ENCODE measurements at regions of chr13 and their contacts with region 1.

Region 1: GRCh38 chr13:25574437-25575411 is 202.9 kb downstream of the ATP8A2 start:
- DNase-seq: peak; percentile 46 to 80 (median 73)
- ATAC-seq: peak; percentile 66
- H3K4me3 ChIP-seq: no peak overlapping the region
- H3K4me3 Mint-ChIP-seq: no peak overlapping the region
- H3K27ac ChIP-seq: no peak overlapping the region
- H3K27ac Mint-ChIP-seq: no peak overlapping the region
- H3K4me1 ChIP-seq: no peaks in the 10 kb centered on the region
- H3K4me1 Mint-ChIP-seq: no peaks in the 10 kb centered on the region
- H3K27me3 ChIP-seq: peaks cover 0 to 4% of the 10 kb centered on the region in 2 experiments
- H3K27me3 Mint-ChIP-seq: peaks cover 28% of the 10 kb centered on the region
- CTCF ChIP-seq: peak; percentile 68

Region 2: DNA sequence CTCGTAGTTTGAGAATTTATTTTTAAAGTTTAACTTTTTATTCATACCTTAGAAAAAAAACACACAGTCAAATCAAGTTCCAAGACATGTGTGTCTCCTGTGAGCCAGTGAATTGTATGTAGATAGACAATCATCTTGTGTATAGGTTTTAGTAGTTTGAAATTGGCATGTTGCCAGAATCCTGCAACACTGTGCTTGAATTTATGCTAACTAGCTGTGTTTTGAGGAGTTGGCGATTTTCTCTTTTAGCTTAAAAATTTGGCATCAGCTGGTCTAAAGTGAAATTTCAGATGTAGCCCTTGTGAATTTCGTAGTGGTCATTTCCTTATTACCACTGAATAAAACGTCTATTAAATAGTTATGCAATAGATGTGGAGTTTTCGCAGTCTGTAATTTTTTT is 10.3 kb after region 1 on chr13:
- CTCF ChIA-PET with region 1: interaction called, 22 read pairs
- POLR2A ChIA-PET with region 1: no interaction called
- intact Hi-C with region 1: no loop called
- DNase-seq: no peak
- ATAC-seq: no peak
- H3K4me3 ChIP-seq: no peak overlapping the region
- H3K4me3 Mint-ChIP-seq: no peak overlapping the region
- H3K27ac ChIP-seq: no peak overlapping the region
- H3K27ac Mint-ChIP-seq: no peak overlapping the region
- H3K4me1 ChIP-seq: no peaks in the 10 kb centered on the region
- H3K4me1 Mint-ChIP-seq: no peaks in the 10 kb centered on the region
- H3K27me3 ChIP-seq: no peaks in the 10 kb centered on the region
- H3K27me3 Mint-ChIP-seq: peaks cover 14% of the 10 kb centered on the region
- CTCF ChIP-seq: no peak

Region 3: DNA sequence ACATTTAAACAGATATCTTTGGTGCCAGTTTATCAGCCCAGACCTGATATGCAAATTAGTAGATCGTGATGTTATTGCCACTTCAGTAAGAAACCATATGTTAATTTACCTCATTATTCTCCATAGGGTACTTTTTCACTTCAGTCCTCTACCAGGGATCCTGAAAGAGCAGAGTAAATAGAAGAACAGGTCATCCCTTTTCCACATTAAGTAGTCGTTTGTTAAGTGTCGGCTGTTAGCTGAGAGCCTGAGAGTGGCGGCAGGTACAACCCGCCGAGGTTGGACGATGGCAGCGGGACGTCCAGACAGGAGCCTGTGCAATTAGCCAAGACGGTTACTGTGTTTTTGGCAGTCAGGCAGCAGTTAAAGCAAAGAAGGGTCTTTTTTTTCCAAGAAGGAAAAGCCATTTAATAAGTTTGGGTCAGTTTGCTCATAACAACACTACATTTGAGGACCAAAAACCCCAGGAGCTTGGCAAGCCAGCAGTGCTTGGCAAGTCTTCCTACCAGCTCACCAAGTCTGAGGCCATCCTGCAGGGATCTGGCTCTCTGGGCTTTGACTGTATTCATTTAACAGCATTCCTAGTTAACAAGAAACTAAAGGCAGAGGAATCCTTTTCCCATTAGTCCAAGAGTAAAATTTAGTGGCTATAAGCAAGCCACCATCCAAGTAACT is 245.3 kb after region 1 on chr13:
- CTCF ChIA-PET with region 1: no interaction called
- POLR2A ChIA-PET with region 1: no interaction called
- intact Hi-C with region 1: loop called in 1 of 2 experiments (anchors 10 kb)
- DNase-seq: no peak
- ATAC-seq: no peak
- H3K4me3 ChIP-seq: no peak overlapping the region
- H3K4me3 Mint-ChIP-seq: no peak overlapping the region
- H3K27ac ChIP-seq: no peak overlapping the region
- H3K27ac Mint-ChIP-seq: no peak overlapping the region
- H3K4me1 ChIP-seq: no peaks in the 10 kb centered on the region
- H3K4me1 Mint-ChIP-seq: no peaks in the 10 kb centered on the region
- H3K27me3 ChIP-seq: no peaks in the 10 kb centered on the region
- H3K27me3 Mint-ChIP-seq: no peaks in the 10 kb centered on the region
- CTCF ChIP-seq: no peak

Region 4: GRCh38 chr13:26062844-26063444 is 488.2 kb after region 1 on chr13:
- CTCF ChIA-PET with region 1: interaction called, 32 read pairs
- POLR2A ChIA-PET with region 1: interaction called, 3 read pairs
- intact Hi-C with region 1: loop called (anchors 1 kb)
- DNase-seq: peak in 5 of 9 experiments; percentile 33 to 72 (median 54)
- ATAC-seq: peak; percentile 52
- H3K4me3 ChIP-seq: no peak overlapping the region
- H3K4me3 Mint-ChIP-seq: no peak overlapping the region
- H3K27ac ChIP-seq: no peak overlapping the region
- H3K27ac Mint-ChIP-seq: no peak overlapping the region
- H3K4me1 ChIP-seq: no peaks in the 10 kb centered on the region
- H3K4me1 Mint-ChIP-seq: no peaks in the 10 kb centered on the region
- H3K27me3 ChIP-seq: no peaks in the 10 kb centered on the region
- H3K27me3 Mint-ChIP-seq: no peaks in the 10 kb centered on the region
- CTCF ChIP-seq: peak; percentile 68

Region 5: DNA sequence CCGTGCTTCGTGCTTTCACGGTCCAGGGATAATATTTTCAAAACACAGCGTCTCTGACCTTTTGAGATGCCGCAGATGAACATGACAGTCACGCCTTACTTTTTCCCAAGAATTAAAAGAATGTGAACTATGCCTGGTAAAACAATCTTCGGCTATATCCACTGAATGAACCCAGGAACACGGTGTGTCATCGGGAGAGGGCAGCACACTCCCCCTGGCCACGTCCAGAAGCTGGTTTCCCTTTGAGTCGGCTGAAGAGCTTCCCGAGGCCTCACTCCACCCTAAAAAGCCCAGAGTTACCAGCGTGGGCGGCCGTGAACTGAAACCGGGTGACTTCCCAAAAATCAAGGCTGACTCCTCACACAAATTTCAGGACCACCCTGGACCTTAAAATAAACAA is 500.0 kb after region 1 on chr13:
- CTCF ChIA-PET with region 1: interaction called, 32 read pairs
- POLR2A ChIA-PET with region 1: no interaction called
- intact Hi-C with region 1: loop called (anchors 1 kb)
- DNase-seq: no peak
- ATAC-seq: no peak
- H3K4me3 ChIP-seq: no peak overlapping the region
- H3K4me3 Mint-ChIP-seq: no peak overlapping the region
- H3K27ac ChIP-seq: no peak overlapping the region
- H3K27ac Mint-ChIP-seq: no peak overlapping the region
- H3K4me1 ChIP-seq: no peaks in the 10 kb centered on the region
- H3K4me1 Mint-ChIP-seq: no peaks in the 10 kb centered on the region
- H3K27me3 ChIP-seq: no peaks in the 10 kb centered on the region
- H3K27me3 Mint-ChIP-seq: peaks cover 29% of the 10 kb centered on the region
- CTCF ChIP-seq: no peak

Region 6: GRCh38 chr13:26498656-26499591 is 924.2 kb after region 1 on chr13:
- CTCF ChIA-PET with region 1: interaction called, 5 read pairs
- POLR2A ChIA-PET with region 1: no interaction called
- intact Hi-C with region 1: loop called (anchors 2 to 10 kb)
- DNase-seq: no peak
- ATAC-seq: no peak
- H3K4me3 ChIP-seq: no peak overlapping the region
- H3K4me3 Mint-ChIP-seq: no peak overlapping the region
- H3K27ac ChIP-seq: no peak overlapping the region
- H3K27ac Mint-ChIP-seq: no peak overlapping the region
- H3K4me1 ChIP-seq: no peaks in the 10 kb centered on the region
- H3K4me1 Mint-ChIP-seq: peaks cover 4% of the 10 kb centered on the region
- H3K27me3 ChIP-seq: no peaks in the 10 kb centered on the region
- H3K27me3 Mint-ChIP-seq: peaks cover 11% of the 10 kb centered on the region
- CTCF ChIP-seq: no peak

Measured in CD8-positive, alpha-beta T cell (primary cell).